ENCODE measurements at regions of chr1 and their contacts with region 1.

Region 1: DNA sequence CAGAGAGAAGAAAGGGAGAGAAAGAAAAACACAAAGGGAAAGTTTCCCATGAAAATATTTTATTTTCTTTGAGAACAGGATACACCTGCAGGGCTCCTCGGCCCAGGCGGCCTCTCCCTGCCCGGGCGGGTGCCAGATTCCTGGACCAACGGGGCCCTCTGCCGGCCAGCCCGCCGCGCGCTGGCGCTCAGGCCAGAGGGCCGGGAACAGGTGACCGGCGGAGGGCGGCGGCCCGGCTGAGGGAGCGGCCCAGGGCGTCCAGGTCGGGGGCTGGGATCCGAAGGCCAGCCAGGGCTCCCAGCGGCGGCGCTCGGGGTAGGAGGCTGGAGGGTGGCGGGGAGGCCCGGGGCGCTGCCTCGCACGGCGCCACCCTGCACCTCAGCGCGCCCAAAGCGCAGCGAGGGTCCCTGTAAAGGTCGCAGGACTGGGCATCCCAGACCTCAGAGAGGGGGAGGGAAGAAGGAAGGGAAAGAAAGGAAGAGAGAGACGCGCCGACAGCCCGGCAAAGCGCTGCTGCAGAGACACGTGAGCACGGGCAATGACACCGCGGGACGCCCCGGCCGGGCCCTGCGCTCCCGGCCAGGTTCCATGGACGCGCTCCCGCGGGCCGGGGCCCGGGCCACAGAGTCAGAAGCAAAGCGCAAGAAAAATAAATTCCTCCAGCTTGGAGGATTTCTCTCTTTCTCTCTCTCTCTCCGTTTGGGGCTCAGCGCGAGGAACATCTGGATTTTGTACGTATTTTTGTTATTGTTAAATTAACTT is 927 bp downstream of the WNT9A start:
- DNase-seq: peak; percentile 96
- H3K4me3 Mint-ChIP-seq: peak overlapping the region; percentile 66
- H3K27ac Mint-ChIP-seq: peak overlapping the region; percentile 86
- H3K4me1 Mint-ChIP-seq: peaks cover 14% of the 10 kb centered on the region
- H3K27me3 Mint-ChIP-seq: no peaks in the 10 kb centered on the region
- CTCF ChIP-seq: peak; percentile 98

Region 2: GRCh38 chr1:227563324-227564201 is 383.2 kb before region 1 on chr1 and contains the start of gene ZNF678:
- CTCF ChIA-PET with region 1: no interaction called
- POLR2A ChIA-PET with region 1: interaction called, 4 read pairs
- intact Hi-C with region 1: loop called (anchors 2 kb)
- DNase-seq: peak; percentile 100
- H3K4me3 Mint-ChIP-seq: peak within 1 kb of the TSS; percentile 98
- H3K27ac Mint-ChIP-seq: peak within 1 kb of the TSS; percentile 100
- H3K4me1 Mint-ChIP-seq: peaks cover 10% of the 10 kb centered on the region
- H3K27me3 Mint-ChIP-seq: no peaks in the 10 kb centered on the region
- CTCF ChIP-seq: no peak
- total RNA-seq, gene ZNF678: 10.8 and 13.0 TPM in 2 replicates

Region 3: DNA sequence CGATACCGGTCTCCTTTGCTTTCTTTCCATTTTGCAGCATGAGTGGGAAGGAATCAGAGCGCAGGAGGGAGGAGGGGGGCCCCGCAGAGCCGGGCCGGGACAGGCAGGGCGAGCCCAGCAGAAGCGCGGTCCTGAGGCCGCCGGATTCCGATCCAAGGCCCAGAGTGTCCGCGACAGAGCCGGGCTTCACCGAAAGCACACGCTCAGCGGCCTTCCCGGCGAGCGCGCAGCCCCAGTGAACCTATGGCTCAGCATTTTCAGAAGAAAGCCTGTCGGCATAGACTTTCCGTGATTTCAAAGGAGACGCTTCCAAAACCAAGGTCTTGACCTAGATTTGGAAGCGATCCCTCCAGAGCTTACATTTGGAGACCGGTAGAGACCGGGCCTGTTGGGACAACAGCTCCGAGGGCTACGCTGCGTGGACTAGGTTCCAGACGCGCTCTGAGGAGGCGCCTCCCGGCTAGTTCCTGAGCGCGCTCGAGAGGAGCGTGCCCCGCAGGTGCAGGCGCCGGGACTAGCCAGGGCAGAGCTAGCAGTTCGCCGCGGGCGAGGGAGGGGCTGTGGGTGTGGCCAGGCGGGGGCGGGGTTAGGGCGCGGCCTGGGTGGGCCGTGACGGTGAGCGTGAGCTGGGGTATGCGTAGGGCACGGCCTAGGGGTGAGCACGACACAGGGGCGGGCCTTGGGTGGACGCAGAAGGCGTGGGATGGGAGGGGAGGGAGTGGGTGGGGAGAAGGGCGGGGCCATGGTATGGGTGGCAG is 159.1 kb before region 1 on chr1:
- CTCF ChIA-PET with region 1: interaction called, 4 read pairs
- POLR2A ChIA-PET with region 1: interaction called, 15 read pairs
- intact Hi-C with region 1: loop called (anchors 1 kb)
- DNase-seq: peak; percentile 97
- H3K4me3 Mint-ChIP-seq: peak overlapping the region; percentile 71
- H3K27ac Mint-ChIP-seq: peak overlapping the region; percentile 49
- H3K4me1 Mint-ChIP-seq: peaks cover 5% of the 10 kb centered on the region
- H3K27me3 Mint-ChIP-seq: no peaks in the 10 kb centered on the region
- CTCF ChIP-seq: no peak

Region 4: GRCh38 chr1:227886993-227887696 is 59.7 kb before region 1 on chr1:
- CTCF ChIA-PET with region 1: interaction called, 4 read pairs
- POLR2A ChIA-PET with region 1: no interaction called
- intact Hi-C with region 1: loop called (anchors 1 kb)
- DNase-seq: no peak
- H3K4me3 Mint-ChIP-seq: no peak overlapping the region
- H3K27ac Mint-ChIP-seq: no peak overlapping the region
- H3K4me1 Mint-ChIP-seq: peaks cover 7% of the 10 kb centered on the region
- H3K27me3 Mint-ChIP-seq: no peaks in the 10 kb centered on the region
- CTCF ChIP-seq: no peak

Region 5: DNA sequence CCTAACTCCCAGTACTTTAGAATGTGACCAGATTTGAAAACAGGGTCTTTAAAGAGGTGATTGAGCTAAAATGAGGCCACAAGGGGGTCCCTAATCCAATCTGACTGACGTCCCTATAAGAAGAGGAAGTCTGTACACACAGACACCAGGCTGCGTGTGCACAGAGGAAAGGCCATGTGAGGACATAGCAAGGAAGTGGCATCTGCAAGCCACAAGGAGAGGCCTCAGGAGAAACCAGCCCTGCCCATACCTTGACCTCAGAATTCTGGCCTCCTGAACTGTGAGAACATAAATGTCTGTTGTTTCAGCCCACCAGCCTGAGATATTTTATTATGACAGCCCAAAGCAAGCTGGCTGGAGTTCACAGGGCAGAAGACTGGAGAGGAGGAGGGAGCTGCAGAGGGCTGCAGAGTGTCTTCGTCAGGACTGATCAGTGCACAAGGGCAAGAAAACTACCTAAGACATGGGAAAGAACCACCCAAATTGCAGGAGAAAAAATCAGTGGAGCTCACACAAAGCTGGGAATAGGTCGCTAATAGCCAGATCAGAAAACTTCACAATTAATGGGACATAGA is 14.9 kb after region 1 on chr1:
- CTCF ChIA-PET with region 1: interaction called, 10 read pairs
- POLR2A ChIA-PET with region 1: interaction called, 17 read pairs
- intact Hi-C with region 1: no loop called
- DNase-seq: no peak
- H3K4me3 Mint-ChIP-seq: no peak overlapping the region
- H3K27ac Mint-ChIP-seq: no peak overlapping the region
- H3K4me1 Mint-ChIP-seq: peaks cover 6% of the 10 kb centered on the region
- H3K27me3 Mint-ChIP-seq: peaks cover 37% of the 10 kb centered on the region
- CTCF ChIP-seq: no peak

Measured in MCF 10A (cell line).